ENCODE measurements at regions of chr7 and their contacts with region 1.

Region 1: GRCh38 chr7:106609416-106609815 is 51.5 kb downstream of the CCDC71L start:
- DNase-seq: peak; percentile 88
- H3K4me3 ChIP-seq: no peak overlapping the region
- H3K27ac ChIP-seq: peak overlapping the region; percentile 88
- H3K4me1 ChIP-seq: peaks cover 20% of the 10 kb centered on the region
- H3K27me3 ChIP-seq: no peaks in the 10 kb centered on the region
- CTCF ChIP-seq: no peak
- POLR2A ChIP-seq: no peak

Region 2: DNA sequence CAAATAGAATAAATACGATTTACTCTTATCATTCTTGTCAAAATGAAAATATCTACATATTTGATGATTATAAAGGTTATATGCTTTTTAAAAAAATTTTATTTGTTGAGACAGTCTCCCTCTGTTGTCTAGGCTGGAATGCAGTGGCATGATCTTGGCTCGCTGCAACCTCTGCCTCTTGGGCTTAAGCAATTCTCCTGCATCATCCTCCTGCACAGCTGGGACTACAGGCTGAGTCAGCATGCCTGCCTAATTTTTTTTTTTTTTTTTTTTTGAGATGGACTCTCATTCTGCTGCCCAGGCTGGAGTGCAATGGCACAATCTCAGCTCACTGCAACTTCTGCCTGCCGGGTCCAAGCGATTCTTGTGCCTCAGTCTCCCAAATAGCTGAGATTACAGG is 1136.3 kb before region 1 on chr7:
- CTCF ChIA-PET with region 1: no interaction called
- POLR2A ChIA-PET with region 1: no interaction called
- dilution Hi-C with region 1: no loop called
- intact Hi-C with region 1: no loop called
- DNase-seq: no peak
- H3K4me3 ChIP-seq: no peak overlapping the region
- H3K27ac ChIP-seq: no peak overlapping the region
- H3K4me1 ChIP-seq: peaks cover 1% of the 10 kb centered on the region
- H3K27me3 ChIP-seq: no peaks in the 10 kb centered on the region
- CTCF ChIP-seq: no peak
- POLR2A ChIP-seq: no peak

Region 3: GRCh38 chr7:106461993-106462859 is 147.2 kb before region 1 on chr7:
- CTCF ChIA-PET with region 1: no interaction called
- POLR2A ChIA-PET with region 1: no interaction called
- dilution Hi-C with region 1: no loop called
- intact Hi-C with region 1: no loop called
- DNase-seq: peak; percentile 83
- H3K4me3 ChIP-seq: no peak overlapping the region
- H3K27ac ChIP-seq: peak overlapping the region; percentile 32
- H3K4me1 ChIP-seq: peaks cover 22% of the 10 kb centered on the region
- H3K27me3 ChIP-seq: no peaks in the 10 kb centered on the region
- CTCF ChIP-seq: peak; percentile 25 to 37
- POLR2A ChIP-seq: no peak

Region 4: DNA sequence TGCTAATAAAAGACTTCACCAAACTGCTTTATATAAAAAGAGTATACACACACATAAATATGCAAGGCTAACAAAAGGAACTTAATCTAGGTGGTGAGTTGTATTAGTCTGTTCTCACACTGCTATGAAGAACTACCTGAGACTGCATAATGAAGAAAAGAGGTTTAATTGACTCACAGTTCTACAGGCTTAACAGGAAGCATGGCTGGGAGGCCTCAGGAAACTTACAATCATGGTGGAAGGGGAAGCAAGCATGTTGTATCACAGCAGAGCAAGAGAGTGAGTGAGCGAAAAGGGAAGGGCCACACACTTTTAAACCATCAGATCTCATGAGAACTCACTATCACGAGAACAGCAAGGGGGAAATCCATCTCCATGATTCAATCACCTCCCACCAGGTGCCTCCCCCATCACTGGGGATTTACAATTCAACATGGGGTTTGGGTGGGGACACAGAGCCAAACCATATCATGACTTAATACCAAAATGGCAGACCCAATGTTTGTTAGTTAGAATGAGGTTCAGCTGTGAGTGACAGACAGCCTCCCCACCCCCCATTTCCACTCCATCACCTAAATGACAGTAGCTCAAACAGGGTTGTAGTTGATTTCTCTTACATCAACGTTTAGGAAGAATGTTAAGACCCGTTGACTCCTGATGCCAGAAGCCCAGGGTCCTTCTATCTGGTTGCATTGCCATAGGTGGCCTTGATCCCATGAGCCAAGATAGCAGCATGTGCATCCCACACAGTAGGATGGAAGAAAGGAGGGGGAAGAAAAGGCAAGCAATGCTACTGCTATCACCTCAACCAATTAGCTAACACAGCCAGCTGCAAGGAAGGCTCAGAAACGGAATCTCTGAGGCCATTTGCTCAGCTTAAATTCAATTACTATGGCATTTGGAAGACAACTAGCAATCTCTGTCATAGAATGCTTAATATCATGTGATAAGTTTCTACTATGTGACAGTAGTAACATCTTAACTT is 25.4 kb before region 1 on chr7:
- CTCF ChIA-PET with region 1: no interaction called
- POLR2A ChIA-PET with region 1: no interaction called
- dilution Hi-C with region 1: no loop called
- intact Hi-C with region 1: no loop called
- DNase-seq: no peak
- H3K4me3 ChIP-seq: no peak overlapping the region
- H3K27ac ChIP-seq: no peak overlapping the region
- H3K4me1 ChIP-seq: peaks cover 4% of the 10 kb centered on the region
- H3K27me3 ChIP-seq: no peaks in the 10 kb centered on the region
- CTCF ChIP-seq: no peak
- POLR2A ChIP-seq: no peak

Region 5: DNA sequence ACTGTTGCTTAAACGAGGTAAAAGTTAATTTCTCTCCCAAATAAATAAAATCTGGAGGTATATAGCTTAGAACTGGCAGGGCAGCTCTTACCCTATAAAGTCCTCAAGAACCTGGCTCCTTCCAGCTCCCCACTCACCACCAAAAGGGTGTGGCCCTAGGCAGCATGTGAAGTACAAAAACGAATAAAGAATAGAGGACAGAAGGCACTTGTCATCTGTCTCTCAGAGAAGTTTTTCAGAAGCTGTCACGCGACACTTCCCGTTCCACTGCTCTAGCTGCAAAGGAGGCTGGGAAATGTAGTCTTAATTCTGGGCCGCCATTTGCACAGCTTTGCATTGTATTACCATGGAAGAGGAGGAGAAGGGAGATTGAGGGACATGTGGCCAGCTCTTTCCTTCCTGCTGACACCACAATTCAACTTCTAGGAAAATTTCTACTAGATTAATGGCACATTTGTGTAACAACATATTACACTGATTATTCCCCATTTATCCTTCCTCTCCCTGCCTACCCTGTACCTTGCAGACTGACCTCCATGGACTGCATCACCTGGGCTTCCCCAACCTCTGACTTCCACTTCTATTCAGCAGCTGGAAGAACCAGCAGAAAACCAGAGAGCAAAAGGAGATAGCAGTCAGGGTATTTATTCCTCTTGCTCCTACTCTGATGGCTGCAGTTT is 10.6 kb before region 1 on chr7:
- CTCF ChIA-PET with region 1: interaction called, 9 read pairs
- POLR2A ChIA-PET with region 1: no interaction called
- dilution Hi-C with region 1: no loop called
- intact Hi-C with region 1: loop called (anchors 1 kb)
- DNase-seq: peak; percentile 87
- H3K4me3 ChIP-seq: peak overlapping the region in 2 of 3 experiments; percentile 29 to 43
- H3K27ac ChIP-seq: peak overlapping the region; percentile 41
- H3K4me1 ChIP-seq: peaks cover 3% of the 10 kb centered on the region
- H3K27me3 ChIP-seq: no peaks in the 10 kb centered on the region
- CTCF ChIP-seq: no peak
- POLR2A ChIP-seq: peak; percentile 32

Region 6: DNA sequence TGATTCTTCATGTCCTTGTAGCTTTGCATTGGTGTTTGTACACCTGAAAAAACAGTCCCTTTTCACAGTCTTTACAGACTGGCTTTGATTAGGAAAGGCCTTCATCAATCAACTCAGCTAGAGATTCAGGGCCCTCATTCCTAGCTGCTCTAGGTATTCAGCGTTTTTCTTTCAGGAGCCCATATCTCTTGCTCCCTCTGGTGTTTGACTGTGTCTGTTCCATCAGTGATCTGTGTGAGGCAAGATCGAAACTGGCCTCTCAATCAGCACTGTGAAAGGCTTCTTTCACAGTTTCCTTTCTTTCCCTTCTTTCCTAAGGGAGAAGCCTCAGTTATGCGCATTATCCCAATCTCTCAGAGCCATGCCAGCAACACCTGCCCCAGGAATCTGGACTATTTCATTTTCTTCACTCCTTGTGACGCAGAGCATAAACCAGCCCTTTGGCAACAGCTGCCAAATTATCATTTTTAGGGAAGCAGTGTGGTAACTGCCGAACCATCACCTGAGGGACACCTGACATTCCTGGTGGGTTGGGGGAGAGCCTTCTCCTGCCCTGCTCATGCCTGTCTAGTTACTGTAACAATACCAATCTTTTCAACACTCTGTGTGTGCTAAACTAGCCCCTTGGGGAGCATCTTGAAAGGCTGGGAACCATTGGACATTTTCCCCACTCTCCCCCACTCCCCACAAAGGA is 127.2 kb after region 1 on chr7:
- CTCF ChIA-PET with region 1: no interaction called
- POLR2A ChIA-PET with region 1: no interaction called
- dilution Hi-C with region 1: no loop called
- intact Hi-C with region 1: loop called (anchors 5 kb)
- DNase-seq: peak; percentile 84
- H3K4me3 ChIP-seq: no peak overlapping the region
- H3K27ac ChIP-seq: peak overlapping the region; percentile 37
- H3K4me1 ChIP-seq: peaks cover 18% of the 10 kb centered on the region
- H3K27me3 ChIP-seq: no peaks in the 10 kb centered on the region
- CTCF ChIP-seq: peak; percentile 65 to 74
- POLR2A ChIP-seq: no peak

Region 7: DNA sequence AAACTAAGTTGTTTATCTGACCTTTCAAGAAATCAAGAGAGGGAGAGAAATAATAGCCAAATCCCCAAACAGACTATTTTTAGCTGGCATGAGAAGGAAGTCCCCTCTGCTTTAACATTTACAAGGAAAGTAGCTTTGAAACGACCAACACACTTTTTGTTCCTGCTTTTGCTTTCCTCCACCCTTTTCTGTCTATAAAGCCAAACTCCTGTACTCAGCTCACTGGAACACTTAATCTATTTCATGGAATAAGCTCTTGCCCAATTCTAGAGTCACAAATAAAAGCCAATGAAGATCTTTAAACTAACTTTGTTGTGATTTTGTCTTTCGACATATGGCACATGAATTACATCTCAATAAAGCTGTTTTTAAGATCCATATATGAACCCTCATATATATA is 138.4 kb after region 1 on chr7:
- CTCF ChIA-PET with region 1: no interaction called
- POLR2A ChIA-PET with region 1: no interaction called
- dilution Hi-C with region 1: no loop called
- intact Hi-C with region 1: no loop called
- DNase-seq: no peak
- H3K4me3 ChIP-seq: no peak overlapping the region
- H3K27ac ChIP-seq: no peak overlapping the region
- H3K4me1 ChIP-seq: no peaks in the 10 kb centered on the region
- H3K27me3 ChIP-seq: no peaks in the 10 kb centered on the region
- CTCF ChIP-seq: no peak
- POLR2A ChIP-seq: no peak